ENCODE measurements at regions of chr6 and their contacts with region 1.

Region 1: DNA sequence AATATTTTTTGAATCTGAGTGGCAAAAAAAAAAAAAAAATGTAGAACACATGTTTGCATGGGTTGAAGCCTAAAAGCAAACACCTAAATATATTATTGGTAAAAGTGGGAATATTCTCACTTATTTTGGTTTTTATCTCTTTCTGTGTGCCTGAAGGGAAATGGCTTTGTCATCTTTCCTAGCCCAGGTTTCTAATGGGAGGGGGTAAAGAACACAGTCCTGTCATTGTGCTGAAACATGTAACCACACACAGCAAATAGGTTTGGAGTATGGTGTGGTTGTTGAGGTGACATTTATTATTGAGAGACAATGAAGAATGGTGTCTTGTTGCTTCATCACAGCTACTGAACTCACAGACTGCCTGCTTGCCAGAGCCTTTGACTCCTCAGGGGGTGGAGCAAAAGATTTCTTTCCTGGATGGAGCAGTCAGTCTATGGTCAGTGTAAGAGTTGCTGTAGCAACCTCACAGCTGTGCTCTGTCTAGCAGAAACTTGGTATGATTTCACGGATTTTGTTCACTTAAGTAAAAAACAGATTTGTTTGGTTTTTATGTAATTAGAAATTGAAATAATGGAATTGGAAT is 70.2 kb downstream of the CEP57L1 start:
- DNase-seq: peak; percentile 41
- H3K4me3 ChIP-seq: no peak overlapping the region
- H3K27ac ChIP-seq: no peak overlapping the region
- H3K4me1 ChIP-seq: no peaks in the 10 kb centered on the region
- H3K27me3 ChIP-seq: no peaks in the 10 kb centered on the region
- CTCF ChIP-seq: no peak

Region 2: GRCh38 chr6:109117346-109118035 is 48.0 kb before region 1 on chr6:
- CTCF ChIA-PET with region 1: interaction called, 13 read pairs
- dilution Hi-C with region 1: no loop called
- in situ Hi-C with region 1: no loop called
- intact Hi-C with region 1: no loop called
- DNase-seq: peak; percentile 60
- H3K4me3 ChIP-seq: no peak overlapping the region
- H3K27ac ChIP-seq: peak overlapping the region; percentile 3
- H3K4me1 ChIP-seq: peaks cover 28% of the 10 kb centered on the region
- H3K27me3 ChIP-seq: no peaks in the 10 kb centered on the region
- CTCF ChIP-seq: no peak